ENCODE measurements at regions of chr2 and their contacts with region 1.

Region 1: DNA sequence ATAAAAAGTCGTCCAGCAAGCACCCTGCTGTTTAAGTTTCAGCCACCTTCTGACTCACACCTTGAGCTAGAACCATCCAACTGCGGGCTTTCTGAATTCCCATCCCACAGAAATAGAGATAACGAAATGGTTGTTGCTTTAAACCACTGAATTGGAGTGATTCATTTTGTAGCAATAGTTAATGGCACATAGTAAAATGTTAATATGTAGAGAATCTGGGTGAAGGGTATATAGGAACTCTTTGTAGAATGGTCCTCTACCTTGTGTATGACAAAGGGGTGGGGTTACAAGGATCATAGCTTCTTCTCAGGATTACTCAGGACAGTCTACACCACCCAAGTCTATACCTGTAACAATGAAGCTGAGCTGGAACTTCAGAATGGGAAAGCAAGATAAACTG is 2.4 kb upstream of the MAPRE3 start:
- DNase-seq: no peak
- ATAC-seq: no peak
- H3K4me3 ChIP-seq: no peak overlapping the region
- H3K27ac ChIP-seq: no peak overlapping the region
- H3K4me1 ChIP-seq: peaks cover 0 to 23% of the 10 kb centered on the region in 2 donors
- H3K27me3 ChIP-seq: peaks cover 0 to 5% of the 10 kb centered on the region in 2 donors
- CTCF ChIP-seq: no peak

Region 2: DNA sequence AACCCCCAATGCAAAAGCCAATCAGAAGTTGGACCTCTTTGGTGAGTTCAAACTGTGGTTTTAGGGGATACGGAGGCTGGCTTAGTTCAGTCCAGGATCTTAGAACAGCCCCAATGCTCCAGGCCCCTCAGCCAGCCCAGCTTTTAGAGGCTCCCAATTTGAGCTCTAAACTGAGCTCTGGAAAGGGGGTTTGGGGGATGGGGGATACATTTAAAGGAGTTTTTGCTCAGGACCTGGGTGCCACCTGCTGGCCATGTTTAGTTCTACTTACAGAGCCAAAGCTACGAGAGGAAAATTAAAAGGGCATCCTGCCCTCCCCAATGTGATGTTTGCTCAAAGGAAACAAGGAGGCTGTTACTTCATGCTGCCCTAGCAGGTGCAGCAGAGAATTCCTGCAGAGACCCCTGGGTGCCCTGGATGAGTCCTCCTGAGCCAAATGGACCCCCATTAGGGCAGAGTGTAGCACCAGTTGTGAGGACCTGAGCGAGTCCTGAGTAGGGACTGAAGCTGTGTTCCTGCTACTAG is 48.9 kb after region 1 on chr2:
- intact Hi-C with region 1: loop called in 1 of 2 experiments (anchors 5 kb)
- DNase-seq: peak in 1 of 4 donors; percentile 52
- ATAC-seq: peak; percentile 69
- H3K4me3 ChIP-seq: no peak overlapping the region
- H3K27ac ChIP-seq: peak overlapping the region in 1 of 2 donors; percentile 19
- H3K4me1 ChIP-seq: peaks cover 7 to 12% of the 10 kb centered on the region in 2 donors
- H3K27me3 ChIP-seq: no peaks in the 10 kb centered on the region
- CTCF ChIP-seq: peak; percentile 59 to 61

Region 3: DNA sequence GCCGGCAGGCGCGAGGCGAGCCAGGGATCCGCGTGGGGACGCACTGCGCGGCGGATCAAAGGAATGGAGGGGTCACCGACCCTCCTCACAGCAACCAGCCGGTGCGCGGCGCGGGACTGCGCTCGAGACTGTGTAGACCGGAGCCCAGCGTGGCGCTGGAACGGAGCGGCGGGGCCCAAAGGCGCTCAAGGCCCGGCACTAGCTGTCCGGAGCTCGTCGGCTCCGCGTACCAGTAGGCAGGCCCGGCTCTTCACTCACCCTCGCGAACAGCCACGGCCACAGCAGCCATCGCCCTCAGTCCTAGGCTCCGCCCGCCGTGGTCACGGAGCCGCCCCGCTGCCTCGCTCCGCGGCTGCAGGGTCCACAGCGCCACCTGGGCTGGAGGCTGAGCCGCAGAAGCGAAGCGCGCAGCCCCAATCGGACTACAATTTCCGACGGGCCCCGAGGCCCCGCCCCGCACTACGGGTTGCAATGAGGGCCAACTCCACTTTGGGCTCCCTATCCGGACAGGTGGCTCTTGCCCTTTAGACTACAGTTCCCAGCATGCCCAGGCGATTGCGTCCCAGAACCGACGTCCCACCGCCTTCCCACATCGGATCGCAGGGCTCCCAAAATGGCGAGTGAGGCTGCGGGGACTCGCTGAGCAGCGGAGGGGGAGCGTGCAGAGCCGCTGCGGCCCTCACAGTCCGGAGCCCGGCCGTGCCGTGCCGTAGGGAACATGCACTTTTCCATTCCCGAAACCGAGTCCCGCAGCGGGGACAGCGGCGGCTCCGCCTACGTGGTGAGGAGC is 402.2 kb after region 1 on chr2 and contains the starts of genes EIF2B4 and SNX17:
- intact Hi-C with region 1: no loop called
- DNase-seq: peak; percentile 99 to 100 (median 99)
- ATAC-seq: peak; percentile 94
- H3K4me3 ChIP-seq: peak within 1 kb of the TSS; percentile 95 to 97
- H3K27ac ChIP-seq: peak within 1 kb of the TSS; percentile 82 to 94
- H3K4me1 ChIP-seq: peaks cover 31 to 37% of the 10 kb centered on the region in 2 donors
- H3K27me3 ChIP-seq: no peaks in the 10 kb centered on the region
- CTCF ChIP-seq: peak; percentile 69
- polyA plus RNA-seq, gene EIF2B4: 50.3 to 61.4 (median 53.4) TPM
- polyA plus RNA-seq, gene SNX17: 93.1 to 113 (median 102) TPM

Measured in left lung (tissue), 14 donors.